ENCODE measurements at regions of chr9 and their contacts with region 1.

Region 1: DNA sequence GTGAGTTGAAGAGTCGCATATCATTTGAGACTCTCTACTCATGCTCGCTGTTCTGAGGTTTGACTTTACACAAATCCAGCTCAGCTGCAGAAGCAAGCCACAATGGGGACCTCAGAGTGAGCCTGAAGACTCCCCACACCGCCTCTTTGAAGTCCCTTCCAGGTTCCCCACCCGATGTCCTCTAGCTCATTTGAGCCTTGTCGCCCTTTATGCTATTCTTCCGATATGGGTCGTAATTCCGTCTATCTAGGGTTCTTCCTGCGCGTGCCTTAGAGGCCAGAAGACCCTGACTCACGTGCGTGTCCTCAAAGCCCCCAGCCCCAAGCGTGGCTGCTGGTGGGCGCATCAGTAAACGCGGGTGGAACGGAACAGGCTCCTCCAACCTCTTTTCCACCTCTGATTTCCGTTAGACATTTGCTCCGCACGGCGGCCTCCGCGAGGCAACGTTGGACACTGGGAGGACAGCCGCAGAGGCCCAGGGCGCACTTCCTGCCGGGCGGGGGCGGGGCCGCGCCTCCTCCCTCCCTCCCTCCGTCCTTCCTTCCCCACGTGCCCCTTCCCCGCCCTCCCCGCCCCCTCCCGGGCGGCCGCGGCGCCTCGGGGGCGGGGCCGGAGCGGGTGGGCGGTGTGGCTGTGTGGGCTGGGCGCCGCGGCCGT is at the start of gene SNX30:
- DNase-seq: peak; percentile 78
- H3K4me3 Mint-ChIP-seq: peak within 1 kb of the TSS; percentile 86
- H3K27ac Mint-ChIP-seq: peak within 1 kb of the TSS; percentile 88
- H3K4me1 Mint-ChIP-seq: peaks cover 67% of the 10 kb centered on the region
- H3K27me3 Mint-ChIP-seq: peaks cover 5% of the 10 kb centered on the region
- total RNA-seq, gene SNX30: 1.9 and 2.1 TPM in 2 replicates

Region 2: GRCh38 chr9:112771359-112772214 is 21.3 kb after region 1 on chr9:
- intact Hi-C with region 1: loop called (anchors 1 kb)
- DNase-seq: no peak
- H3K4me3 Mint-ChIP-seq: peak overlapping the region; percentile 25
- H3K27ac Mint-ChIP-seq: no peak overlapping the region
- H3K4me1 Mint-ChIP-seq: peaks cover 33% of the 10 kb centered on the region
- H3K27me3 Mint-ChIP-seq: peaks cover 2% of the 10 kb centered on the region

Measured in activated T-helper 1 cell treated with anti-CD3 and anti-CD28 coated beads, Interleukin-12 subunit alpha, Interleukin-12 subunit beta, Interleukin-2, Interleukin-4 antibody, amounts not matched to agents 30 ng/mL and 10 ng/mL and 1 ng/mL, durations not matched to agents 14 hours and 24 hours and 36 hours (primary cell).